ENCODE measurements at regions of chr5 and their contacts with region 1.

Region 1: DNA sequence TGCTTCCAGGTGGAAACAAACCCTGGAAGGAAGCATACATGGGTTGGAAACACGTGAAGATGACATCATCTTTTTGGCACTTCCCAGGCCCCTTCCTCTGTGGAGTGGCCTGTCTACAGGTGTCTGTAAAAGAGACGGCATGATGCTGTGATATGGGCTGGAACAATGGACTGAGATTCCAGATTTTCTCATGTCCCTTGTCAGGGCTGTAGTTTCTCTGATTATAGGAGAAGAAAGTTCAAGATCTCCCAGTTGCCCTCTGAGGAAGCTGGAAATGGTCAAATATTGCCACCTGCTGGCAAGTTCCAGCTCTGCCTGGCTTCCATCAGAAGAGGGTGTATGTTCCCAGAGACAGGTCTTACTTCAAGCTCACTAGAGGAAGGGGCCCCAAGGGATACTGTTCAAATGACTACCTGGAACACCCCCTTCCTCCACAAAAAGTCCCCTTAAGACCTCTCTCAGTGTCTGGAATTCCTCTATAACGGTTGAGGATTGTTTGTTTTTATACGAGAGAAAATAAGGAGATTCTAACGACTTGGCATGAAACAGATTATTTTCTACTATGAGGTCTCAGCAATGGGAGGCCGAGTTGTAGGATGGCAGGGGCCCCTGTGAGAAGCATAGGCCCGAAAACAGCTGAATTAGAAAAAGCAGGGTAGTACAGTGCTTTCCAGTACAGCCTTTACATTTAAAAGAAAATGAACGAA is 7.3 kb upstream of the ANXA6 start:
- DNase-seq: peak; percentile 73
- CTCF ChIP-seq: peak; percentile 94

Region 2: GRCh38 chr5:150778517-150779396 is 386.1 kb before region 1 on chr5 and contains the start of gene SMIM3:
- in situ Hi-C with region 1: loop called (anchors 25 kb)
- DNase-seq: peak; percentile 66
- CTCF ChIP-seq: peak; percentile 62

Measured in GM13976 (cell line).